ENCODE measurements at regions of chr10 and their contacts with region 1.

Region 1: GRCh38 chr10:77544617-77545016 is 93.0 kb downstream of the KCNMA1 start:
- DNase-seq: no peak
- ATAC-seq: no peak
- H3K4me3 Mint-ChIP-seq: no peak overlapping the region
- H3K27ac Mint-ChIP-seq: no peak overlapping the region
- H3K4me1 Mint-ChIP-seq: peaks cover 32% of the 10 kb centered on the region
- H3K27me3 Mint-ChIP-seq: no peaks in the 10 kb centered on the region
- CTCF ChIP-seq: no peak

Region 2: GRCh38 chr10:77513781-77514331 is 30.8 kb before region 1 on chr10:
- CTCF ChIA-PET with region 1: no interaction called
- POLR2A ChIA-PET with region 1: no interaction called
- intact Hi-C with region 1: no loop called
- DNase-seq: no peak
- ATAC-seq: no peak
- H3K4me3 Mint-ChIP-seq: no peak overlapping the region
- H3K27ac Mint-ChIP-seq: no peak overlapping the region
- H3K4me1 Mint-ChIP-seq: no peaks in the 10 kb centered on the region
- H3K27me3 Mint-ChIP-seq: no peaks in the 10 kb centered on the region
- CTCF ChIP-seq: no peak

Region 3: GRCh38 chr10:77603534-77603927 is 58.9 kb after region 1 on chr10:
- CTCF ChIA-PET with region 1: no interaction called
- POLR2A ChIA-PET with region 1: no interaction called
- intact Hi-C with region 1: loop called (anchors 5 kb)
- DNase-seq: no peak
- ATAC-seq: peak; percentile 45
- H3K4me3 Mint-ChIP-seq: peak overlapping the region; percentile 16
- H3K27ac Mint-ChIP-seq: peak overlapping the region; percentile 37
- H3K4me1 Mint-ChIP-seq: peaks cover 22% of the 10 kb centered on the region
- H3K27me3 Mint-ChIP-seq: no peaks in the 10 kb centered on the region
- CTCF ChIP-seq: no peak

Region 4: DNA sequence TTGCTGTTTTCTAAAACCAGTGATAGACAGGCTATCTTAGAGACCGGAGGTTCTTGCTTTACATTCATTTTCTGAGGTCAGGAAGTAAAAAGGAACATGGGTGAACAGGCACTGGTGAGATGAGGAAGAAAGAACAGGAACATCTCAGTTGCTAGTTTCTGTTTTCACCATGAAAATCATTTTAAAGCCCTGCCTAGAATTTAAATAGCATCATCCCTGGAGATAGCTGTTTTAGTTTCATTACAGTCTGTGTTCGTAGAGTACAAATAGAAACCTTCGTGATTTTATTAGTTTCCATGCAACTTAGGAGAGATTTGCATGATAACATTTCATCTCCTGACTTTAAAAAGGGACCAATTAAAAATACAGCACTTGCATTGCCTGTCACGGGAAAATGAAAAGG is 78.3 kb after region 1 on chr10:
- CTCF ChIA-PET with region 1: no interaction called
- POLR2A ChIA-PET with region 1: no interaction called
- intact Hi-C with region 1: loop called (anchors 5 kb)
- DNase-seq: no peak
- ATAC-seq: peak; percentile 86
- H3K4me3 Mint-ChIP-seq: peak overlapping the region; percentile 69
- H3K27ac Mint-ChIP-seq: peak overlapping the region; percentile 78
- H3K4me1 Mint-ChIP-seq: peaks cover 38% of the 10 kb centered on the region
- H3K27me3 Mint-ChIP-seq: no peaks in the 10 kb centered on the region
- CTCF ChIP-seq: no peak